Common myeloid progenitor, CD34-positive (primary cell): ENCODE measurements at regions of chr1 and their contacts with region 1.

Region 1: GRCh38 chr1:181105134-181106021 is 16.9 kb downstream of the IER5 start:
- DNase-seq: peak; percentile 83 to 92 (median 92)
- H3K4me3 ChIP-seq: peak overlapping the region; percentile 64 to 88 (median 76)
- H3K27ac ChIP-seq: peak overlapping the region in 1 of 2 experiments; percentile 73
- H3K4me1 ChIP-seq: peaks cover 0 to 58% (median 40%) of the 10 kb centered on the region in 4 experiments
- H3K27me3 ChIP-seq: peaks cover 0 to 2% (median 0%) of the 10 kb centered on the region in 5 experiments

Region 2: GRCh38 chr1:181117638-181118449 is 12.5 kb after region 1 on chr1:
- CTCF ChIA-PET with region 1: interaction called, 37 read pairs
- POLR2A ChIA-PET with region 1: interaction called, 4 read pairs
- DNase-seq: no peak
- H3K4me3 ChIP-seq: no peak overlapping the region
- H3K27ac ChIP-seq: no peak overlapping the region
- H3K4me1 ChIP-seq: peaks cover 0 to 9% (median 0%) of the 10 kb centered on the region in 4 experiments
- H3K27me3 ChIP-seq: no peaks in the 10 kb centered on the region

Region 3: DNA sequence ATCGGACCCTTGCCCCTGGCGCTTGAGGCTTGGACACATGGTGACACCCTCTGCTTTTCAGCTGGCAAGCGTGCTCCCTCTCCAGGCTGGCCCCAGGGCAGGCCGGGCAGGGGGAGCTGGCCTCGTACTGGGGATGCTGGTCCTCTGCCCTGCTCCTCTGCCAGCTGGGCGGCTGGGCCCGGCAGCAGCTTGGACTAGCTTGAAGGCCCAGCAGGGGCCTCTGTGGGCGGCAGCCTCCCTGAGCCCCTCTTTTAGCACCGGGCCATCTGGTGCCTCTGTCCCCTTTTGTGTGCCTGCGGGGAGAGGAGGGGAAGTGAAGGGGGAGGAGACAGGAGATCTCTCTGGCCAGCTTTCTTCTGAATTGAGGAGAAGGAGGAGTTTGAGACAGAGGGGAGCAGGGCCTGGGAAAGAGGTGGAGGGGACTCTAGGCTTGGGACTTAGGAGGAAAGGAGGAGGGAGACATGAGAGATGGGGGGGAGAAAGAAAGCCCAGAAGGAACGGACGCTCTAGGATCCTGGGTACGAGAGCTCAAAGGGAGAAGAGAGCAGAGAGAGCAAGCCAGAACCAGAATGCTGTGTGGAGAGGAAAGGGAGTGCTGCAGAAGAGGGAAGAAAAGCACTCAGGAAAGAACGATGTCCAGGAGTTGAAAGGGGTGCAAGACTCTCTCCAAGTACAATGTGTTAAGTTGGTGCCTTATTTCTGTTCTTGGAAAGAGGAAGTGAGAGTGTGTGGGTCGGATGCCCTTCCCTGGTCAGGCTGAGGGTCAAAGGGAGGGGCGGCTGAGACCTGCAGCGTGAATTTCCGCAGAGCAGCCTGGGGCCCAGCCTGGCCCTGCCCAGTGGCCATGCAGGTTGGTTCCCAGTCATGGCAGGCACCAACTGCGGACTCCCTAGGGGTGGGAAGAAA is 23.5 kb after region 1 on chr1:
- CTCF ChIA-PET with region 1: interaction called, 202 read pairs
- POLR2A ChIA-PET with region 1: interaction called, 11 read pairs
- DNase-seq: peak in 2 of 3 donors; percentile 61 to 72
- H3K4me3 ChIP-seq: peak overlapping the region in 5 of 7 experiments; percentile 21 to 48 (median 38)
- H3K27ac ChIP-seq: peak overlapping the region in 1 of 2 experiments; percentile 28
- H3K4me1 ChIP-seq: peaks cover 12 to 82% (median 53%) of the 10 kb centered on the region in 4 experiments
- H3K27me3 ChIP-seq: no peaks in the 10 kb centered on the region